ENCODE measurements at regions of chr3 and their contacts with region 1.

Region 1: GRCh38 chr3:120399372-120399771 is 50.2 kb upstream of the LRRC58 start:
- DNase-seq: no peak
- H3K4me3 ChIP-seq: no peak overlapping the region
- H3K27ac ChIP-seq: no peak overlapping the region
- H3K4me1 ChIP-seq: no peaks in the 10 kb centered on the region
- H3K27me3 ChIP-seq: no peaks in the 10 kb centered on the region
- CTCF ChIP-seq: no peak
- POLR2A ChIP-seq: no peak

Region 2: GRCh38 chr3:120033596-120033995 is 365.8 kb before region 1 on chr3:
- intact Hi-C with region 1: no loop called
- DNase-seq: no peak
- H3K4me3 ChIP-seq: no peak overlapping the region
- H3K27ac ChIP-seq: no peak overlapping the region
- H3K4me1 ChIP-seq: no peaks in the 10 kb centered on the region
- H3K27me3 ChIP-seq: no peaks in the 10 kb centered on the region
- CTCF ChIP-seq: no peak
- POLR2A ChIP-seq: no peak

Region 3: DNA sequence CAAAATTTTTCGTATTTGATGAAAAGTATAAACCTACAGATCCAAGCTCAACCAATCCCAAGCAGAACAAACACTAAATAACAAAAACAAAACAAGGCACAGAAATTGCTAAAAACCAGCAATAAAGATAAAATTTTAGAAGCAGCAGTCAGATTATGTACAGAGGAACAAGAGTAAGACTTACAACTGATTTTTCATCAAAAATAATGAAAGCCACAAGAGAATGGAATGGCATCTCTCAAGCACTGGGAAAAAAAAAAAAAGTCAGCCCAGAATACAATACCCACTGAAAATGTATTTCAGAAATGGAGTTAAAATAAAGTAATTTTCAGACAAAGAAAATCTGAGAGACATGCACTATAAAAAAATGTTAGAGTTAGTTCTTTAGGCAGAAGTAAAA is 141.4 kb before region 1 on chr3:
- intact Hi-C with region 1: loop called (anchors 10 kb)
- DNase-seq: no peak
- H3K4me3 ChIP-seq: no peak overlapping the region
- H3K27ac ChIP-seq: no peak overlapping the region
- H3K4me1 ChIP-seq: no peaks in the 10 kb centered on the region
- H3K27me3 ChIP-seq: no peaks in the 10 kb centered on the region
- CTCF ChIP-seq: no peak
- POLR2A ChIP-seq: no peak